Heart right ventricle (tissue), 16 donors: ENCODE measurements at regions of chr10 and their contacts with region 1.

Region 1: DNA sequence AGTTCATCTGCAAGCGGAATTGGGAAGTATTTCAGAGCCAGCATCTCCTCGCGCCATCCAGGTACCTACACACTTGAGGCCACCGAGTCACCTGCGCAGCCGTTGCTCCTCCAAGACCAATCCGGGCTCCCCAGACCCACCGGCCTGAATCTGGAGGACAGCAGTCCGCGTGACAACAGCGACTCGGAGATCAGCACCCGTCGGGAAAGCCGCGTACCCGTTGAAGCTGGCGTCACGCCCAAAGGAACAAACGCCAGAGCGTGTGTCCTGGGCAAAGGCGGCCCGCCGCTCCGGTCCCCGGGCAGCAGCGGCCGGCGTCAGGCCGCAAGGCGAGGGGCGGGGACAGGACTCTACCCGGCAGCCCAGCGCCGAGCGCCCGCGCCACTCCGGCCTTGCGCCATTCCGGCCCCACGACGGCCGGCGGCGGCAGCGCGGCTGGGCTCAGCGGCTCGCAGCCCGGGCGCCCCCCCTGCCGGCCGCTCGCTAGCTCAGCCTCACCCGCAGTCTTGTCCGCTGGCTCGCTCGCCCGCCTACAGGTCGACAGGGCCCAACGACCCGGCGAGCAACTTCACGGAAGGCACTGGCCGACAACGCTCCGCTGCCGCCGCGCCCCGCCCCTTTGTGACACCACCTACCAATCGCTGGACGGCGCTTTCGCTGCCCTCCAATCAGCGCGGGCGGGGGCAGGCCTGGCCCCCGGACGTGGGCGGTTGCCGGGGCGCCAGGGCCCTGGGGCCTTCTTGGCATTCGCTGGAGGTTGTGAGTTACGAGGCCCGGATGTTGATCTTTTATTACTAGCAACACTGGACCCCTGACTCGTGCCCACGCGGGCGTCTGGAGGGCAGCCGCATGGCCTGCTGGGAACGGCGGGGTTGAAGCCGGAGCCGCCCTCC is at the start of gene ZFAND4:
- DNase-seq: peak; percentile 98
- ATAC-seq: peak; percentile 98 to 100 (median 99)
- H3K4me3 ChIP-seq: peak within 1 kb of the TSS; percentile 61 to 98 (median 81)
- H3K27ac ChIP-seq: peak within 1 kb of the TSS; percentile 59 to 96 (median 91)
- H3K4me1 ChIP-seq: peaks cover 0 to 24% (median 6%) of the 10 kb centered on the region in 9 donors
- H3K27me3 ChIP-seq: no peaks in the 10 kb centered on the region
- CTCF ChIP-seq: peak; percentile 54 to 92 (median 73)
- total RNA-seq, gene ZFAND4: 9.5 to 12.5 (median 10.5) TPM

Region 2: DNA sequence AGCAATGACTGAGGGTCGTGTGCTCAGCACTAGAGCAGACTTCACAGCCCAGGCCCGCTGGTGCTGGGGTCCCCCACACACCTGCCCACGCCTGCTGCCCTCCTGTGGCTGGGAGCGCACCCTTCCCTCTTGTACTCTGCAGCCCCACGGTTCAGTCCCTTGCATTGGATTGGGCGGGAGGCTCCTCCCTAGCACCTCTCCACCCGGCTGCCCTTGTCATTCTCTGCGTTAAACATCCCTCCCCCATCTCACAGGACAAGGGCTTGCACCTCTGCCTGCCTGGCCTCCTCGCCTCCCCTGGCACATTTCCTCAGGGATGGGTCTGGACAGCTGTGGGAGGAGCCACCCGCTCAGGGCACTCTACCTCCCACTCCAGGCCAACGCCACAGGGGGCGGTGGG is 229.8 kb before region 1 on chr10:
- intact Hi-C with region 1: no loop called
- DNase-seq: no peak
- ATAC-seq: no peak
- H3K4me3 ChIP-seq: no peak overlapping the region
- H3K27ac ChIP-seq: no peak overlapping the region
- H3K4me1 ChIP-seq: peaks cover 0 to 6% (median 0%) of the 10 kb centered on the region in 9 donors
- H3K27me3 ChIP-seq: peaks cover 0 to 21% (median 0%) of the 10 kb centered on the region in 7 donors
- CTCF ChIP-seq: no peak

Region 3: DNA sequence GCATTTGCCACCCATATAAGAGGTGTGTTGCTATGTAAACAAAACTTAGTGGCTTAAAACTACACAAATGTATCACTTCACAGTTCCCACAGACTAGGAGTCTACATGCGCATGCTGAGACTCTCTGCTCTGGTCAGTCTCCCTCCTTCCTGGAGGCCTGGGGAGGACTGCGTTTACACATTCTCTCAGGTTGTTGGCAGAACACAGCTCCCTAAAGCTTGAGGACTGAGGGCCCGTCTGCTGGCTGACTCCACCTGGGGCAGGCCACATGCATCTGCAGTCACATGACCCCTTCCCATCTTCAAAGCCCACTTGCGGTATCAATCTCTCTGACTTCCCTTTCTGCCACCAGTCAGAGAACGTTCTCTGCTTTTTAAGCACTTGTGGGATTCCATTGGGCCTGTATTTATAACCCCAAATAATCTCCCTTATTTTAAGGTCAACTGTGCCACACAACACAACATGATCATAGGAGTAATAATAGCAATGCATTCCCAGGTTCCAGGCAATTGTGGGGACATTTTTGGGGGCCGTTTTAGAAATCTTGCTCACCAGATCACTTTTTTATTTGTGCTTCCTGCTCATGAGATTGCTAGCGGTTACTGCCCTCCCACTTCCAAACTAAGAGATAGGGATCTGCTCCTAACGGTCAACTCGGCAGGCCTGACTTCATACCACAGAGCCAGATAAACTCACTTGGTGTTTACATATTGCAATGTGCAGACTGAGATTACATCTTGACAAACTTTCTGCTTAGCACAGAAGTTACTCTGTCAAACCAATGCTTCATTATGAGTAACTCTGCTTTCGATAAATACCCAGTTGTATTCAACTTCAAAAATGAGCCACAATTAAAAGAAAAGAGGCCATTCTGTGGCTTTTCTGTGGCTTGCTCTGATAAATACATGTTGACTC is 202.1 kb before region 1 on chr10:
- intact Hi-C with region 1: loop called in 7 of 10 experiments (anchors 2 to 10 kb)
- DNase-seq: peak in 1 of 2 donors; percentile 20
- ATAC-seq: peak in 7 of 8 donors; percentile 31 to 71 (median 41)
- H3K4me3 ChIP-seq: no peak overlapping the region
- H3K27ac ChIP-seq: peak overlapping the region in 5 of 10 donors; percentile 1 to 60 (median 34)
- H3K4me1 ChIP-seq: peaks cover 0 to 45% (median 25%) of the 10 kb centered on the region in 9 donors
- H3K27me3 ChIP-seq: no peaks in the 10 kb centered on the region
- CTCF ChIP-seq: no peak

Region 4: DNA sequence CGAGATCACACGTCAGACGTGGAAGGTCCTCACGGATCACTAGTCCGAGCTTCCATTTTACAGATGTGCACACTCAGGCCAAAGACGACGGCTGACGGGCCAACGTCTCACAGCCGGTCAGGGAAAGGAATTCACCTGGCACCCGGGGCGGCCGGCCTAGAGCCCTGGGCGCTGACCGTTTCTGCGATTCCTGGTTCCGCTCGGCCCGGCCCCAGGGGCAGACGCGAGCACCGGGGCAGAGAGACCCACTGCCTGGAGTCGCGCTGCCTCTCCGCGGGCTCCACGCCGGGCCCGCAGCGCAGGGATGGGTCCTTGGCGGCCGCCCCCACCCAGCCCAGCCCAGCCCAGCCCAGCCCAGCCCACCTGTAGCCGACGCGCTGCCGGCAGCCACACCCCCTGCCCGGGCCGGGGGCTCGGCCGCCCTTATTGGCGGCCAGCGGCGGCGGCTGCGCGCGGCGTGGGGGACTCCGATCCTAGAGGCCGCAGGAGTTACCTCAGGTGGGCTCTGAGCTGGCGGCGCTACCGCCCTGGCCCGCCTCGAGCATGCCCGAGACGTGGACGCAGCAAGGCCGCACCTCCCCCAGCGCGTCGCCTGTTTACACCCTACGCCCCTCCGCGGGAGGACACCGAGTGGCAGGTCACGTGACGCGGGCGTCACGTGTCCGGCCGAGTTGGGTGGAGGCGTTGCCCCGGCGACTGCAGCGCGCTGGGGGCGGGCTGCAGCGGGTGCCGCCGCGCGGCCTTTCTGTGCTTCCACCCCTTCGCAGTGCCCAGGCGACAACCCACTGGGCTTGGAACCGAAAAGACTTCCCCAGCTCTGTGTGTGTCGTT is 77.9 kb before region 1 on chr10:
- intact Hi-C with region 1: loop called in 4 of 10 experiments (anchors 1 to 10 kb)
- DNase-seq: peak; percentile 91 to 94
- ATAC-seq: peak; percentile 98 to 100 (median 99)
- H3K4me3 ChIP-seq: peak overlapping the region; percentile 61 to 96 (median 82)
- H3K27ac ChIP-seq: peak overlapping the region; percentile 38 to 77 (median 67)
- H3K4me1 ChIP-seq: peaks cover 0 to 34% (median 25%) of the 10 kb centered on the region in 9 donors
- H3K27me3 ChIP-seq: peaks cover 0 to 9% (median 0%) of the 10 kb centered on the region in 7 donors
- CTCF ChIP-seq: peak in 4 of 9 donors; percentile 17 to 42 (median 32)

Region 5: DNA sequence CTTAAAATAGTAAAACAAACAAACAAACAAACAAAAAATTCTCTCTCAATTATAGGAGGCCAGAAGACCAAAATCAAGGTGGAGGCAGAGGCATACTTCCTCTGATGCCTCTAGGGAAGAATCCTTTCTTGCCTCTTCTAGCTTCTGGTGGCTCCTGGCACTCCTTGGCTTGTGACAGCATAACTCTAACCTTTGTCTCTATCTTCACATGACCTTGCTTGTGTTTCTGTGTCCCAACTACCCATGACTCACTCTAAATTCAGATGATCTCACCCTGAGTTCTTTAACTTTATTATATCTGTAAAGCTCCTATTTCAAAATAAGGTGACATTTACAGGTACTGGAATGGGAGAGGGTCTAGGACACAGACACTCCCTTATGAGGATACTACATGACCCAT is 526.1 kb after region 1 on chr10:
- intact Hi-C with region 1: no loop called
- DNase-seq: no peak
- ATAC-seq: no peak
- H3K4me3 ChIP-seq: no peak overlapping the region
- H3K27ac ChIP-seq: no peak overlapping the region
- H3K4me1 ChIP-seq: no peaks in the 10 kb centered on the region
- H3K27me3 ChIP-seq: peaks cover 0 to 6% (median 0%) of the 10 kb centered on the region in 7 donors
- CTCF ChIP-seq: no peak